ENCODE measurements at regions of chr5 and their contacts with region 1.

Region 1: DNA sequence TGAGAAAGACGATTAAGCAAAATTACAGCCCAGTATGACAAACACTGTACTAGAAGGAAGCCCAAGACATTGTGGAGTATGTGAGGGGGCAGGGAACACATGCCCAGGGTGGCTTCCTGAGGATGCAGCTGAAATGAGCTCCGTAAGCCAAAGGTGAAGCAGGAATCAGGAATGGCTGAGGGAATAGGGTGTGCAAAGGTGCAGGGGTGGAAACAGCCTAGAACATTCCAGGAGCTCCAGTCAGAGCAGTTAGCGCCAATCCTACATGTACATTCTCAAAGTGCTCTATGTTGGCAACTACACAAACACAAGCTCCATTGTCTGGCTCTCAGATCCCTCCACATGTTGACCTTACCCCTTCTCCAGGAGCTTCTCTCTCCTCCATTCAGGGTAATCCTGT is 257.9 kb downstream of the MAN2A1 start:
- DNase-seq: no peak
- H3K4me3 ChIP-seq: no peak overlapping the region
- H3K27ac ChIP-seq: no peak overlapping the region
- H3K4me1 ChIP-seq: no peaks in the 10 kb centered on the region
- H3K27me3 ChIP-seq: no peaks in the 10 kb centered on the region
- CTCF ChIP-seq: no peak
- EP300 ChIP-seq: no peak
- POLR2A ChIP-seq: no peak
- RAD21 ChIP-seq: no peak

Region 2: DNA sequence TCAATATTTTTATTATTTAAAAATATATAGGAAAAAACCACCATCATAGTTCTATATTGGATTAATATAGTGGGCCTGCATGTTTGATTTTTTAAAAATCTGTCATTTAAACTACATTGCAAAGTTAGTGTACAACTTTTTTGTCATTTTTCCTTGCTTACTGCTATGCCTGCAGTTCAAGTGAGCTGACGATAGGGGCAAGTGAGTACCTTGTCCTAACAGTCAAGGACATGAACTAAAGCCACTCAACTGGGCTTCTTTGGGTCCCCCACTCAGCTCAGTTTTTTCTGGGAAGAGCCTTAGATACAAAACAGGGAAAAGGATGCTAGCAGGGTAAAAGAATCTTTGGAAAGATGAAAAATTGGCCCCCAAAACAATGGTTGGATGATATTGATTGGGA is 12.0 kb after region 1 on chr5:
- CTCF ChIA-PET with region 1: interaction called, 26 read pairs
- POLR2A ChIA-PET with region 1: no interaction called
- DNase-seq: no peak
- H3K4me3 ChIP-seq: no peak overlapping the region
- H3K27ac ChIP-seq: no peak overlapping the region
- H3K4me1 ChIP-seq: no peaks in the 10 kb centered on the region
- H3K27me3 ChIP-seq: no peaks in the 10 kb centered on the region
- CTCF ChIP-seq: peak in 1 of 3 experiments; percentile 50; a peak in 2 of 4 replicates
- EP300 ChIP-seq: no peak
- POLR2A ChIP-seq: no peak
- RAD21 ChIP-seq: peak; percentile 41 to 49; a peak in 3 of 4 replicates

Measured in H1 (cell line).